Aorta (tissue), 5 donors: ENCODE measurements at regions of chr7 and their contacts with region 1.

Region 1: GRCh38 chr7:134845468-134845867 is 66.0 kb downstream of the CALD1 start:
- DNase-seq: no peak
- ATAC-seq: no peak
- H3K4me3 ChIP-seq: no peak overlapping the region
- H3K27ac ChIP-seq: no peak overlapping the region
- H3K4me1 ChIP-seq: peaks cover 10 to 39% of the 10 kb centered on the region in 2 donors
- H3K27me3 ChIP-seq: no peaks in the 10 kb centered on the region

Region 2: GRCh38 chr7:135074085-135074484 is 228.6 kb after region 1 on chr7:
- intact Hi-C with region 1: loop called in 1 of 2 experiments (anchors 10 kb)
- DNase-seq: no peak
- ATAC-seq: no peak
- H3K4me3 ChIP-seq: no peak overlapping the region
- H3K27ac ChIP-seq: no peak overlapping the region
- H3K4me1 ChIP-seq: no peaks in the 10 kb centered on the region
- H3K27me3 ChIP-seq: no peaks in the 10 kb centered on the region